ENCODE measurements at regions of chr7 and their contacts with region 1.

Region 1: GRCh38 chr7:140810830-140811556 is 113.7 kb downstream of the BRAF start:
- DNase-seq: peak in 1 of 2 experiments; percentile 73
- H3K4me3 ChIP-seq: no peak overlapping the region
- H3K27ac ChIP-seq: no peak overlapping the region
- H3K4me1 ChIP-seq: no peaks in the 10 kb centered on the region
- H3K27me3 ChIP-seq: no peaks in the 10 kb centered on the region
- CTCF ChIP-seq: peak in 2 of 3 experiments; percentile 73 to 80; a peak in 3 of 4 replicates
- EP300 ChIP-seq: no peak
- POLR2A ChIP-seq: no peak
- RAD21 ChIP-seq: peak; percentile 78 to 80

Region 2: GRCh38 chr7:140673063-140673773 is 137.8 kb before region 1 on chr7:
- CTCF ChIA-PET with region 1: interaction called, 10 read pairs
- POLR2A ChIA-PET with region 1: no interaction called
- DNase-seq: peak in 1 of 2 experiments; percentile 82
- H3K4me3 ChIP-seq: peak overlapping the region; percentile 35 to 76 (median 67)
- H3K27ac ChIP-seq: no peak overlapping the region
- H3K4me1 ChIP-seq: peaks cover 0 to 6% (median 2%) of the 10 kb centered on the region in 4 experiments; a peak in 5 of 7 replicates
- H3K27me3 ChIP-seq: peaks cover 0 to 8% (median 2%) of the 10 kb centered on the region in 4 experiments; a peak in 3 of 7 replicates
- CTCF ChIP-seq: no peak
- EP300 ChIP-seq: no peak
- POLR2A ChIP-seq: no peak
- RAD21 ChIP-seq: no peak

Region 3: GRCh38 chr7:140828741-140829140 is 17.7 kb after region 1 on chr7:
- CTCF ChIA-PET with region 1: interaction called, 16 read pairs
- POLR2A ChIA-PET with region 1: interaction called, 3 read pairs
- DNase-seq: no peak
- H3K4me3 ChIP-seq: no peak overlapping the region
- H3K27ac ChIP-seq: no peak overlapping the region
- H3K4me1 ChIP-seq: no peaks in the 10 kb centered on the region
- H3K27me3 ChIP-seq: no peaks in the 10 kb centered on the region
- CTCF ChIP-seq: no peak
- EP300 ChIP-seq: no peak
- POLR2A ChIP-seq: no peak
- RAD21 ChIP-seq: no peak

Region 4: GRCh38 chr7:141014524-141015395 is 203.8 kb after region 1 on chr7 and contains the start of gene MRPS33:
- CTCF ChIA-PET with region 1: interaction called, 39 read pairs
- POLR2A ChIA-PET with region 1: interaction called, 5 read pairs
- DNase-seq: peak; percentile 94 to 95
- H3K4me3 ChIP-seq: peak within 1 kb of the TSS; percentile 56 to 90 (median 76)
- H3K27ac ChIP-seq: peak within 1 kb of the TSS; percentile 90
- H3K4me1 ChIP-seq: no peaks in the 10 kb centered on the region; a peak in 1 of 7 replicates
- H3K27me3 ChIP-seq: no peaks in the 10 kb centered on the region
- CTCF ChIP-seq: peak; percentile 76 to 83 (median 82)
- EP300 ChIP-seq: peak in 1 of 2 experiments; percentile 47; a peak in 1 of 3 replicates
- POLR2A ChIP-seq: peak; percentile 99
- RAD21 ChIP-seq: peak; percentile 30 to 36
- total RNA-seq, gene MRPS33: 62.6 and 66.4 TPM in 2 replicates

Region 5: DNA sequence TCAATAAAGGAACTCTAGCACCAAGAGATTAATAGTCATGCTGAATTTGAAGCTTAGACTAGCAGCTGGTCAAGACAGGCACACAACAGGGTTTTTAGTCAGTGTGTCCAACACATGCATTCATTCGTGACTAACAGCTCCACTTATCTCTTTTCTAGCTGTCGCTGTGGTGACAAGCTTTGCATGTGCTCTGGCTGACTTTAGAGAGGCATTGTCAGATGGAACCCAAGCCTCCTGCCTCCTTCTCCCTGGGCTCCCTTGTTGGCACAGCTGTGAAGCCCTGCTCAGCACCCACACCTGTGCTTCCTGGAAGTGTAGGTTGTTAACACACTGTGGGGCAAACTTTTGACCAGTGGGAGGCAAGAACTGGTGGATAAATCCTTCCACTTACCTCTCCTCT is 730.4 kb after region 1 on chr7:
- CTCF ChIA-PET with region 1: no interaction called
- POLR2A ChIA-PET with region 1: no interaction called
- DNase-seq: no peak
- H3K4me3 ChIP-seq: no peak overlapping the region
- H3K27ac ChIP-seq: no peak overlapping the region
- H3K4me1 ChIP-seq: peaks cover 0 to 8% (median 4%) of the 10 kb centered on the region in 4 experiments; a peak in 4 of 7 replicates
- H3K27me3 ChIP-seq: no peaks in the 10 kb centered on the region
- CTCF ChIP-seq: no peak
- EP300 ChIP-seq: no peak
- POLR2A ChIP-seq: no peak
- RAD21 ChIP-seq: no peak